Activated CD4-positive, alpha-beta memory T cell treated with anti-CD3 and anti-CD28 coated beads for 36 hours (primary cell): ENCODE measurements at regions of chr15 and their contacts with region 1.

Region 1: GRCh38 chr15:65792130-65792987 is at the start of gene DENND4A:
- DNase-seq: peak; percentile 99
- H3K4me3 Mint-ChIP-seq: peak within 1 kb of the TSS; percentile 82
- H3K27ac Mint-ChIP-seq: peak within 1 kb of the TSS; percentile 97
- H3K4me1 Mint-ChIP-seq: peaks cover 60% of the 10 kb centered on the region
- H3K27me3 Mint-ChIP-seq: no peaks in the 10 kb centered on the region
- total RNA-seq, gene DENND4A: 39.9 to 41.3 TPM

Region 2: GRCh38 chr15:65804252-65804931 is 12.0 kb after region 1 on chr15:
- CTCF ChIA-PET with region 1: interaction called, 4 read pairs
- POLR2A ChIA-PET with region 1: interaction called, 11 read pairs
- intact Hi-C with region 1: loop called (anchors 1 kb)
- DNase-seq: no peak
- H3K4me3 Mint-ChIP-seq: no peak overlapping the region
- H3K27ac Mint-ChIP-seq: peak overlapping the region; percentile 31
- H3K4me1 Mint-ChIP-seq: peaks cover 35% of the 10 kb centered on the region
- H3K27me3 Mint-ChIP-seq: no peaks in the 10 kb centered on the region

Region 3: DNA sequence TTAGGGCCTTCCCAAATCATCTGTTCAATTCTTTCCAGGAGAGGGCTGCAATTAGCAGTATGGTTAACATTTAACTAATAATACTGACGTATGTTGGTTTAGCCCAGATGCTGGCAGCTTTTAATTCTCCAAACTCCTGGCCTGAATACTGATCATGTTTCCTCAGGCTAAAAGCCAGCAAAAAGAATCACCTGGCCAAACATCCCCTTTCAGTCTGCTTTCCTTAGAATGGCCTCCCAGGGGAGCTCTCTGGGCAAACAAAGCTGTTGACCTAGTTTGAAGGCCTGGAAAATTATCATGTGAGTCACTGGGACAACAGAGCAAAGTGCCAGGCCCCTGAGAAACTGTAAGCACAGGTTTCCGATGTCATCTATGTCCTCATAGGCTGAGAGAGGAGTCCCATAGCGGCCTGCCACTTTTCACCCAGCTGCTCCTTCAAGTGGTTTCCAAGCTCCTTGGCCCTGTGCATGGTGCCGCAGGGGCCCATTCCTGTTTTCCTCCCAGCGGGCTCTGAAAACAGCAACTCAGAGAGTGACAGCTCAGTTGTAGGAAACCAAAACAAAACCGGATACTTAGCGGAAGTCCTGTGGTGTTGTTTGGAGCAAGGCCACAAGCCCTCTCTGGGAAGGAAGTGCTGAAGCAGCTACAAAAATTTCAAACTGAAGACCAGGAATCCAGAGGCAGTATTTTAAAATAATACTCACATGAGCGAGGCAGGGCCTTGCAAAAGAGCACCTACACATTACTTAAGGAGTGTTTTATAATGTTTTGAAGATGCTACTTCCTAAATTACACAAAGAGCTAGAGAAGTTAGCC is 40.4 kb after region 1 on chr15:
- CTCF ChIA-PET with region 1: interaction called, 11 read pairs
- POLR2A ChIA-PET with region 1: interaction called, 10 read pairs
- intact Hi-C with region 1: loop called (anchors 1 kb)
- DNase-seq: peak; percentile 72
- H3K4me3 Mint-ChIP-seq: peak overlapping the region; percentile 68
- H3K27ac Mint-ChIP-seq: peak overlapping the region; percentile 94
- H3K4me1 Mint-ChIP-seq: peaks cover 45% of the 10 kb centered on the region
- H3K27me3 Mint-ChIP-seq: no peaks in the 10 kb centered on the region

Region 4: GRCh38 chr15:65887565-65887964 is 95.2 kb after region 1 on chr15:
- CTCF ChIA-PET with region 1: no interaction called
- POLR2A ChIA-PET with region 1: interaction called, 3 read pairs
- intact Hi-C with region 1: loop called (anchors 1 kb)
- DNase-seq: peak; percentile 58
- H3K4me3 Mint-ChIP-seq: no peak overlapping the region
- H3K27ac Mint-ChIP-seq: peak overlapping the region; percentile 66
- H3K4me1 Mint-ChIP-seq: peaks cover 78% of the 10 kb centered on the region
- H3K27me3 Mint-ChIP-seq: no peaks in the 10 kb centered on the region

Region 5: GRCh38 chr15:67531379-67532059 is 1739.2 kb after region 1 on chr15:
- CTCF ChIA-PET with region 1: no interaction called
- POLR2A ChIA-PET with region 1: no interaction called
- intact Hi-C with region 1: loop called (anchors 10 kb)
- DNase-seq: no peak
- H3K4me3 Mint-ChIP-seq: no peak overlapping the region
- H3K27ac Mint-ChIP-seq: no peak overlapping the region
- H3K4me1 Mint-ChIP-seq: peaks cover 16% of the 10 kb centered on the region
- H3K27me3 Mint-ChIP-seq: no peaks in the 10 kb centered on the region